Left ventricle myocardium inferior (tissue), 1 donor: ENCODE measurements at regions of chr11 and their contacts with region 1.

Region 1: GRCh38 chr11:6705905-6706535 is 22.9 kb upstream of the MRPL17 start:
- DNase-seq: no peak
- H3K4me3 ChIP-seq: no peak overlapping the region
- H3K27ac ChIP-seq: peak overlapping the region; percentile 52
- H3K4me1 ChIP-seq: peaks cover 19% of the 10 kb centered on the region
- H3K27me3 ChIP-seq: no peaks in the 10 kb centered on the region
- CTCF ChIP-seq: peak; percentile 99

Region 2: DNA sequence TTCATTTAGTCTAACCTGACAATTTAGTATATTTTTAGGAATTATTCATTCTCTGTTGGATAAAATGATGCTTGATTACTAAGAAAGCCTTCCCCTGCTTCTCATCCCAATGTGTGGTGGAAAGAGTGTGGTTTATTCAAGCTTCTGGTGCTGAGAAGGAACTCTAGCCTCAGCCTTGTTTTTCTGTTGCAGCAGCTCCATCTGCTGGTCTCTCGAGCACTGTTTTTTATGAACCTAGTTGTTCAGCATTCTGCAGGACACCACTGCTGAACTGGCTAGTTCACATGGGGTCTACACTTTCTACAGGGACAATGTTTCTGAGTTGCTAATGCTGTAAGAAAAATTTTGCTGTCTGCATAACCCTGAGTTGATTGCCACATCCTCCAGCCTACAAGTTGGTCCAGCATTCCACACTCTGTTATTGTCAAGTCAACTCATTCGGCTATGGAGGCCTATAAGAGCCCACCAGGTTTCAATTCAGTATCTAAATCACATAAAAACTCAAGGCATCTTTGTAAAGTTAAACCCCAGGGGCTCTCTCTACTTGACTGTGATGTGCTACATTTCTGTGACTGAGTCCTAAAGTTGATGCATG is 51.5 kb after region 1 on chr11:
- intact Hi-C with region 1: loop called (anchors 5 kb)
- DNase-seq: peak; percentile 26
- H3K4me3 ChIP-seq: no peak overlapping the region
- H3K27ac ChIP-seq: no peak overlapping the region
- H3K4me1 ChIP-seq: no peaks in the 10 kb centered on the region
- H3K27me3 ChIP-seq: no peaks in the 10 kb centered on the region
- CTCF ChIP-seq: peak; percentile 74